ENCODE measurements at regions of chr2 and their contacts with region 1.

Region 1: GRCh38 chr2:143205106-143205764 is 76.0 kb downstream of the ARHGAP15 start:
- DNase-seq: no peak
- H3K4me3 Mint-ChIP-seq: no peak overlapping the region
- H3K27ac Mint-ChIP-seq: peak overlapping the region; percentile 47
- H3K4me1 Mint-ChIP-seq: peaks cover 35% of the 10 kb centered on the region
- H3K27me3 Mint-ChIP-seq: no peaks in the 10 kb centered on the region

Region 2: GRCh38 chr2:143177096-143177786 is 28.0 kb before region 1 on chr2:
- intact Hi-C with region 1: loop called (anchors 2 kb)
- DNase-seq: no peak
- H3K4me3 Mint-ChIP-seq: peak overlapping the region; percentile 74
- H3K27ac Mint-ChIP-seq: peak overlapping the region; percentile 90
- H3K4me1 Mint-ChIP-seq: peaks cover 39% of the 10 kb centered on the region
- H3K27me3 Mint-ChIP-seq: no peaks in the 10 kb centered on the region

Region 3: GRCh38 chr2:143252138-143252907 is 47.1 kb after region 1 on chr2:
- intact Hi-C with region 1: no loop called
- DNase-seq: no peak
- H3K4me3 Mint-ChIP-seq: peak overlapping the region; percentile 43
- H3K27ac Mint-ChIP-seq: peak overlapping the region; percentile 84
- H3K4me1 Mint-ChIP-seq: peaks cover 63% of the 10 kb centered on the region
- H3K27me3 Mint-ChIP-seq: no peaks in the 10 kb centered on the region